Activated T-helper 1 cell treated with anti-CD3 and anti-CD28 coated beads, Interleukin-12 subunit alpha, Interleukin-12 subunit beta, Interleukin-2, Interleukin-4 antibody, amounts not matched to agents 30 ng/mL and 10 ng/mL and 1 ng/mL, durations not matched to agents 14 hours and 24 hours and 36 hours (primary cell): ENCODE measurements at regions of chr6 and their contacts with region 1.

Region 1: GRCh38 chr6:42453031-42453653 is 1.4 kb upstream of the TRERF1 start:
- DNase-seq: peak; percentile 76
- H3K4me3 Mint-ChIP-seq: peak overlapping the region; percentile 100
- H3K27ac Mint-ChIP-seq: peak overlapping the region; percentile 68
- H3K4me1 Mint-ChIP-seq: peaks cover 39% of the 10 kb centered on the region
- H3K27me3 Mint-ChIP-seq: no peaks in the 10 kb centered on the region

Region 2: GRCh38 chr6:42260972-42261371 is 192.2 kb before region 1 on chr6:
- intact Hi-C with region 1: loop called (anchors 5 kb)
- DNase-seq: no peak
- H3K4me3 Mint-ChIP-seq: no peak overlapping the region
- H3K27ac Mint-ChIP-seq: peak overlapping the region; percentile 61
- H3K4me1 Mint-ChIP-seq: peaks cover 14% of the 10 kb centered on the region
- H3K27me3 Mint-ChIP-seq: no peaks in the 10 kb centered on the region

Region 3: GRCh38 chr6:42352856-42353564 is 100.1 kb before region 1 on chr6:
- intact Hi-C with region 1: loop called (anchors 1 kb)
- DNase-seq: no peak
- H3K4me3 Mint-ChIP-seq: no peak overlapping the region
- H3K27ac Mint-ChIP-seq: no peak overlapping the region
- H3K4me1 Mint-ChIP-seq: peaks cover 31% of the 10 kb centered on the region
- H3K27me3 Mint-ChIP-seq: no peaks in the 10 kb centered on the region

Region 4: GRCh38 chr6:42402184-42402583 is 51.0 kb before region 1 on chr6:
- intact Hi-C with region 1: loop called (anchors 1 kb)
- DNase-seq: peak; percentile 66
- H3K4me3 Mint-ChIP-seq: peak overlapping the region; percentile 68
- H3K27ac Mint-ChIP-seq: peak overlapping the region; percentile 87
- H3K4me1 Mint-ChIP-seq: peaks cover 82% of the 10 kb centered on the region
- H3K27me3 Mint-ChIP-seq: no peaks in the 10 kb centered on the region

Region 5: GRCh38 chr6:42520786-42521607 is 67.9 kb after region 1 on chr6:
- intact Hi-C with region 1: loop called (anchors 1 kb)
- DNase-seq: no peak
- H3K4me3 Mint-ChIP-seq: peak overlapping the region; percentile 9
- H3K27ac Mint-ChIP-seq: peak overlapping the region; percentile 89
- H3K4me1 Mint-ChIP-seq: peaks cover 16% of the 10 kb centered on the region
- H3K27me3 Mint-ChIP-seq: peaks cover 4% of the 10 kb centered on the region